Activated CD4-positive, alpha-beta memory T cell treated with anti-CD3 and anti-CD28 coated beads for 36 hours (primary cell): ENCODE measurements at regions of chr16 and their contacts with region 1.

Region 1: DNA sequence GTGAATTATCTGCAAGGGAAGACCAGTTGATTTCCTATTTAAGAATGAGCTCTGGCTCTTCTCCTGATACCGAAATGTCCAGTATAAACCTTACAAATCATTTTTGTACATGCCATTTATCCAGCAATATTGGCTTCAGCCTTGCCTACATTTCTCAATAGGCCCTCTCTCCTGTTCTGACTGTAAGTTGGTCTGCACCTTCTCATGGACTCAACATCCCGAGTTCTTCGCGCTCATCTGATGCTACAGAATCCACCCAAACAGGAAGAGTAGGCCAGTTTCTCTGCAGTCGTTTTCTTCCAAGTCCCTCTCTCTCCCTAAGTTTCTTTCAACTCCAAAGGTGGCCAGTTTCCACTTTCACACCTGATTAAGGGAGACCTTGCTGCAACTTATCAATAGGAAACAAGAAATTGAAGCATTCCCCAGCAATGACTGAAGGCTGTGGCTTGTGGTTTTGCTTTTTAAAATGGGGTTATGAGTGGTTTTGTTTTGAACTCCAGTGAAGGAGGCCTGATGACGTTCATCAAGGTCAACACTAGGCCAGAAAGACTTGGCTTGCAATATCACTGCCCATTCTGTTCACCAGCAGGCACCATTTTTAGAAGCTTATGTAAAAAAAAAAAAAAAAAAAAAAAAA is 383.0 kb downstream of the MAF start:
- DNase-seq: peak; percentile 54
- H3K4me3 Mint-ChIP-seq: peak overlapping the region; percentile 21
- H3K27ac Mint-ChIP-seq: no peak overlapping the region
- H3K4me1 Mint-ChIP-seq: peaks cover 20% of the 10 kb centered on the region
- H3K27me3 Mint-ChIP-seq: no peaks in the 10 kb centered on the region

Region 2: DNA sequence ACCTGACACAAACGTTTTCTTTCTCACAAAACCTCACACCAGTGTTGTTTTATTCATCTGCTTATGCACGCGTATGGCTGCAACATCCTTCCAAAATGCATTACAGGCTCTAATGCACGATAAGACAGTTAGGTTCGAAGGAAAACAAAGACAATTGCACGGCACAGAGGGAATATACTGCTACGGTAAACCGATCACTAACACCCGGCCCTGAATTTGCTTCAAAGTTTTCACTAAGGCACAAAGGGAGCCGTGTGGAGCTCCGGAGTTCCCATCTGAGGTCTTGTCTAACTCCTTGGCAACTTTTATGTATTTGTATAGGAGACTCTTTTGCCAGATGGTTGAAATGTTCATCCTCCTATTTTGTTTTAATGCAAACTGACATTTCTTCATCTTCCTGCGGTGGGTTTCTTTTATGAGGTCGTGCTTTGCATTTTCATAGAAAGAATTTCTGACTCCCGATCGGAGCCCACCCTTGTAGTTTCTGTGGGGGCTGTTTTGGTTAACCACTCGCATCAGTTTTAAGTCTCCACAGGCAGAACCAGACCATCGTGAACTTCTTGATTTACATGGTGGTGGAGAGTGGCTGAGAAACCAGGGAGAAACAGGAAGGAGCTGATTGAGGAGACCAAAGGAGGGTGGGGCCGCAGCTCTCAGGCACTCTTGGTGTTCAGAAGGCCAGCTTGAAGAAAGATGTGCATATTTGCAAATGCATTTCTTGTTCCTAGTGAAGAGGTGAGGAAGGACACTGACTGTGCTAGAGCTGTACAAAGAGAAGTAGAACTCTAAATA is 133.8 kb before region 1 on chr16:
- CTCF ChIA-PET with region 1: no interaction called
- POLR2A ChIA-PET with region 1: no interaction called
- intact Hi-C with region 1: loop called (anchors 5 kb)
- DNase-seq: no peak
- H3K4me3 Mint-ChIP-seq: no peak overlapping the region
- H3K27ac Mint-ChIP-seq: peak overlapping the region; percentile 20
- H3K4me1 Mint-ChIP-seq: peaks cover 56% of the 10 kb centered on the region
- H3K27me3 Mint-ChIP-seq: no peaks in the 10 kb centered on the region

Region 3: GRCh38 chr16:79158337-79158736 is 59.2 kb before region 1 on chr16:
- CTCF ChIA-PET with region 1: no interaction called
- POLR2A ChIA-PET with region 1: interaction called, 3 read pairs
- intact Hi-C with region 1: loop called (anchors 2 kb)
- DNase-seq: no peak
- H3K4me3 Mint-ChIP-seq: no peak overlapping the region
- H3K27ac Mint-ChIP-seq: no peak overlapping the region
- H3K4me1 Mint-ChIP-seq: peaks cover 35% of the 10 kb centered on the region
- H3K27me3 Mint-ChIP-seq: no peaks in the 10 kb centered on the region

Region 4: GRCh38 chr16:80273635-80274538 is 1056.4 kb after region 1 on chr16:
- CTCF ChIA-PET with region 1: no interaction called
- POLR2A ChIA-PET with region 1: no interaction called
- intact Hi-C with region 1: no loop called
- DNase-seq: peak; percentile 19
- H3K4me3 Mint-ChIP-seq: no peak overlapping the region
- H3K27ac Mint-ChIP-seq: no peak overlapping the region
- H3K4me1 Mint-ChIP-seq: no peaks in the 10 kb centered on the region
- H3K27me3 Mint-ChIP-seq: peaks cover 5% of the 10 kb centered on the region